GM10248 (cell line): ENCODE measurements at regions of chr12 and their contacts with region 1.

Region 1: DNA sequence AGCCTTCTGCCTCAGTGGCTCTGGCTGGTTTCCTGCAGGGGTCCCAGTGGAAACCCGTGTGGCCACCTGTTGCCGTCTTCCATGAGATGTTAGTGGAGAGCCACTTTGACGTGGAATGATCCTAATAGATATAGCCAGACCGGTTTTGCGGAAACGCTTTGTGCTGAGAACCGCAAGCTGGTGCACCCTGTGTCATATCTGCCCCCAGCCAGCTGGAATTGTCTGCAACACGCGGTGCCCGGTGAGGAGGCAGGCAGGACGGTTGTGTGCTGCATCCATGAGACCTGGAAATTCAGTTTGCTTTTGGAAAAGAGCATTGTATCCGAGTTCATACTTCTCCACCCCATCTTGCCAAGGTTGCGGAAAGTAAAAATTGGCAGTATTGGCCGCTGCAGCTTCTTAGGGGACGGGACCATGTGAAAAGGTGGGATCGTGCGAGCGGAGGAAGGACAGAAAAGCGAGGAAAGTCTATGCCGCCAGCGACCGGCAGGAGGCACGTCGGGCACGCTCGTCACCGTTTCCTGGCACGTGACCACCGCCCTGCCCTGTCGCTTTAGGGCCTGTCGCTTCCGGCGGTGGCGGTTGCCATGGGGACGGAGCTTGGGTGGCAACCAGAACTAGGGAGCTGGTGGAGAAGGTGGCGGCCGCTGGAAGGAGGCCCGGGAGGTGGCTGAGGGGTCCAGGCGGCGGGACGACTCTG is at the start of gene CFAP251:
- DNase-seq: peak; percentile 97
- CTCF ChIP-seq: peak; percentile 56

Region 2: GRCh38 chr12:120437754-120438494 is 1480.2 kb before region 1 on chr12 and contains the start of gene COX6A1:
- CTCF ChIA-PET with region 1: no interaction called
- POLR2A ChIA-PET with region 1: interaction called, 10 read pairs
- DNase-seq: peak; percentile 98
- CTCF ChIP-seq: peak; percentile 2

Region 3: GRCh38 chr12:121894633-121895032 is 23.5 kb before region 1 on chr12:
- CTCF ChIA-PET with region 1: interaction called, 17 read pairs
- POLR2A ChIA-PET with region 1: no interaction called
- DNase-seq: no peak
- CTCF ChIP-seq: peak; percentile 18

Region 4: GRCh38 chr12:121964813-121965643 is 46.9 kb after region 1 on chr12:
- CTCF ChIA-PET with region 1: no interaction called
- POLR2A ChIA-PET with region 1: no interaction called
- DNase-seq: no peak
- CTCF ChIP-seq: no peak

Region 5: GRCh38 chr12:122064025-122064777 is 146.1 kb after region 1 on chr12:
- CTCF ChIA-PET with region 1: no interaction called
- POLR2A ChIA-PET with region 1: no interaction called
- DNase-seq: peak; percentile 55
- CTCF ChIP-seq: peak; percentile 9